Sigmoid colon (tissue), 7 donors: ENCODE measurements at regions of chr5 and their contacts with region 1.

Region 1: GRCh38 chr5:137754126-137754960 is at the start of gene HNRNPA0:
- DNase-seq: peak; percentile 98
- H3K4me3 ChIP-seq: peak within 1 kb of the TSS; percentile 68 to 80 (median 70)
- H3K27ac ChIP-seq: peak within 1 kb of the TSS; percentile 94 to 99 (median 97)
- H3K4me1 ChIP-seq: peaks cover 0 to 35% (median 27%) of the 10 kb centered on the region in 4 donors
- H3K27me3 ChIP-seq: no peaks in the 10 kb centered on the region
- CTCF ChIP-seq: no peak
- EP300 ChIP-seq: peak in 2 of 4 donors; percentile 8 to 10
- POLR2A ChIP-seq: peak; percentile 97
- total RNA-seq, gene HNRNPA0: 10.0 to 12.2 (median 10.9) TPM

Region 2: GRCh38 chr5:138138949-138139780 is 384.8 kb after region 1 on chr5 and contains the start of gene NME5:
- intact Hi-C with region 1: loop called (anchors 10 kb)
- DNase-seq: peak; percentile 72
- H3K4me3 ChIP-seq: peak within 1 kb of the TSS; percentile 42 to 70 (median 62)
- H3K27ac ChIP-seq: peak within 1 kb of the TSS in 2 of 4 donors; percentile 34 to 43
- H3K4me1 ChIP-seq: peaks cover 0 to 13% (median 6%) of the 10 kb centered on the region in 4 donors
- H3K27me3 ChIP-seq: no peaks in the 10 kb centered on the region
- CTCF ChIP-seq: no peak
- EP300 ChIP-seq: no peak
- POLR2A ChIP-seq: no peak
- total RNA-seq, gene NME5: 1.5 to 3.5 (median 2.6) TPM